ENCODE measurements at regions of chr5 and their contacts with region 1.

Region 1: GRCh38 chr5:112116371-112116770 is 302.7 kb downstream of the EPB41L4A start:
- DNase-seq: peak; percentile 66
- ATAC-seq: peak; percentile 80
- H3K4me3 ChIP-seq: 0 out of 2 replicates have a peak overlapping the region, but pooled peaks have one; percentile 8
- H3K27ac ChIP-seq: peak overlapping the region; percentile 58
- H3K4me1 ChIP-seq: peaks cover 24% of the 10 kb centered on the region
- H3K27me3 ChIP-seq: no peaks in the 10 kb centered on the region
- CTCF ChIP-seq: no peak
- EP300 ChIP-seq: peak in 1 of 2 experiments; percentile 82; a peak in 1 of 4 replicates
- POLR2A ChIP-seq: no peak
- RAD21 ChIP-seq: no peak

Region 2: DNA sequence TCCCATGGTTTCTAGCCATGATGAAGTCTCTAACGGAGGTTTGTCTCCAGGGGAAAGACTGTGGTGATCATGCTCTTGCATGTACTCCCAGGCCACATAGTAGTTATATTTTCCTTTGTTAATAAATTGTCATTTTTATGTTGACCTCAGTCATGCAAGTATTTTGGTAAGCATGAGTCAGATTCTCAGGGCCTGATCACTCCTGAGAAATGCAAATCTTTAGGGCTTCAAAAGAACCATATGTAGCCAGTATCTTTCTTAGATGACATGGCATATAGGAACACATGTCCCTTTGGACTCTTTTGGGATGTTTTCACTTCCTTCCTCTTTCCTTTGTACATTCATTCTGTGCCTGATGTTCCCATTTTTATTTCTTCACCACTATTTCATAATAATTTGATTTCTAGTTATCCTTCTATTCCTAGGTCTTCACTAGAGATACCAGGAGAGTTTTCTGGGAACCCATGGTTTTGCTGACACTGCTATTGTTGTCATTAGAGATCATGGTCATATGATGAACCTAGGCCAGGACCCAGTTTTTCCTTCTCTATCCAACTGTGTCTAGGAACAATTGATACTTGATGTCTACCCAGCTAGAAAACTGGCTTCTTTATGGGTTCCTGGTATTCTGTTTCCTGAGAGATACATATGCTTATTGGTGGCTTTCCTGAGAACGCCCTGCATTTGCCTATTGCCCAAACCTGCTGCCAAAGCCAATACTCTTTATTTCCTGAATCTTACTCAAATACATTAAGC is 111.3 kb before region 1 on chr5:
- CTCF ChIA-PET with region 1: no interaction called
- POLR2A ChIA-PET with region 1: no interaction called
- RAD21 ChIA-PET with region 1: no interaction called
- SMC1A ChIA-PET with region 1: interaction called, 3 read pairs
- in situ Hi-C with region 1: no loop called
- intact Hi-C with region 1: loop called (anchors 5 kb)
- DNase-seq: peak; percentile 53
- ATAC-seq: peak; percentile 90
- H3K4me3 ChIP-seq: no peak overlapping the region
- H3K27ac ChIP-seq: peak overlapping the region; percentile 8; the same call in 1 of the 2 replicates
- H3K4me1 ChIP-seq: peaks cover 7% of the 10 kb centered on the region
- H3K27me3 ChIP-seq: no peaks in the 10 kb centered on the region
- CTCF ChIP-seq: no peak
- EP300 ChIP-seq: peak in 1 of 2 experiments; percentile 9; a peak in 2 of 4 replicates
- POLR2A ChIP-seq: no peak
- RAD21 ChIP-seq: no peak

Region 3: GRCh38 chr5:112025757-112026156 is 90.6 kb before region 1 on chr5:
- CTCF ChIA-PET with region 1: no interaction called
- POLR2A ChIA-PET with region 1: no interaction called
- RAD21 ChIA-PET with region 1: interaction called, 3 read pairs
- SMC1A ChIA-PET with region 1: interaction called, 5 read pairs
- in situ Hi-C with region 1: no loop called
- intact Hi-C with region 1: loop called (anchors 5 kb)
- DNase-seq: peak; percentile 58
- ATAC-seq: peak; percentile 92
- H3K4me3 ChIP-seq: no peak overlapping the region
- H3K27ac ChIP-seq: no peak overlapping the region
- H3K4me1 ChIP-seq: no peaks in the 10 kb centered on the region
- H3K27me3 ChIP-seq: no peaks in the 10 kb centered on the region
- CTCF ChIP-seq: no peak
- EP300 ChIP-seq: 0 out of 4 replicates have a peak, but pooled peaks of 1 of the 2 experiments have one; percentile 8
- POLR2A ChIP-seq: no peak
- RAD21 ChIP-seq: no peak

Region 4: DNA sequence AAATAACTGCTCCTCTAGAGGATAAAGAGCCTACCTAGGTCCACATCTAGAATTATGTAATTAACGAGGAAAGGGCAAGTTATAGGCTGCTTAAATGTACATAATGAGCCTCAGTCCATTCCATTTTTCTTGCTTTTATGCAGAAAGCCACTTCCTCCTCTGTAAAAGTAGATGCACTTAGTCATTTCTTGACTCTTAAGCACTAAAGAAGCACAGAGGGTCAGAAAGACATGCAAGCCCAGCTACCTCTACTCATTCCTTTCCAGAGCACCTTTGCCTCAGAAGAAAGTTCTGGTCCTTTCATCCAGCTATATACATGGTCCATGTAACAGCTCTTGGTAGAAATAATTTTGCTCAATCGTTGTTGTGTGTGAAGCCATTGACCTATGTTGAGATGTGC is 51.4 kb before region 1 on chr5:
- CTCF ChIA-PET with region 1: no interaction called
- POLR2A ChIA-PET with region 1: no interaction called
- RAD21 ChIA-PET with region 1: no interaction called
- SMC1A ChIA-PET with region 1: no interaction called
- in situ Hi-C with region 1: no loop called
- intact Hi-C with region 1: no loop called
- DNase-seq: peak; percentile 3
- ATAC-seq: peak; percentile 72
- H3K4me3 ChIP-seq: no peak overlapping the region
- H3K27ac ChIP-seq: no peak overlapping the region
- H3K4me1 ChIP-seq: no peaks in the 10 kb centered on the region; the same call in 1 of the 2 replicates
- H3K27me3 ChIP-seq: no peaks in the 10 kb centered on the region
- CTCF ChIP-seq: no peak
- EP300 ChIP-seq: no peak
- POLR2A ChIP-seq: no peak
- RAD21 ChIP-seq: no peak

Region 5: DNA sequence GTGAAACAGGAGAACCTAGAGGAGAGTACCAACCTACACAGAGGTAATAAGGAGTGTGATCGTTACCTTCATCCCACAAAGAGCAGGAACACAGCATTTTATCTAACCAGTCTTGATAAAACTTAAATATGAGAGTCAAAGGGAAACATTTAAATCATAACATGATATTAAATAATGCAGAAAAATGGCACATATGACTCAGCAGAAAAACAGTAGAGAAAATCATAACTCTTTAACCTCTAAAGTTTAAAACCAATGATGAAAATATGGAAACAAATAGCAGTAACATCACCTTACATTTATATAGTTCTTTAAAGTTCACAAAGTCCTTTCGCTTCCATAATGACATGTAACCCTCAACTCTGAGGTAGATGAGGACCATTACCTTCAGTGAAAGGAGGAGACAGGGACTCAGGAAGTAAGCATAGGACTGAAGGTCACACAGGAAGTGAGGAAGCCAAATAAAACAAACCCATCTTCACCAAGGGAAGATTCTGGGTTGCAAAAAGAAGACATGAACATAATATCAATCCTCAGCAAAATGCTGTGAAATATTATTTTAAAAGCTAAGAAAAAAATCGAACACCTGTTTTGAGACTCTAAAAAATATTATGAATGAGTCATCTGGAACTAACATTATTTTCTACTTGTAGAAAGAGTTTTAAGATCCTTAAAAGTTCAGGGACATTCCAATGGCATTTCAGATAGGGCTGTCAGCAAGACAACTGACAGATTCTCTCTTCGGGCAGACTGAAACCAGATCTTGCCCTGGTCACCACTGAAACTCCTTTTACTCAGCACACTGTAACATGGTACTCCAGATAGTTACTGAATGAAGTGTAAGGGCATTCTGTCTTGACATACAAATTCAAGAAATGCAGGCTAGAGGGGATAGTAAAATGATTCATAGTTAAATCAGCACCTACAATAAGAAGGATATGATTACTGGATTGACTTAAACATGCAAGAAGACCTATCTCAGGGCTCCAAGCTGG is 154.2 kb after region 1 on chr5:
- CTCF ChIA-PET with region 1: no interaction called
- POLR2A ChIA-PET with region 1: no interaction called
- RAD21 ChIA-PET with region 1: no interaction called
- SMC1A ChIA-PET with region 1: no interaction called
- in situ Hi-C with region 1: no loop called
- intact Hi-C with region 1: no loop called
- DNase-seq: no peak
- ATAC-seq: peak; percentile 91
- H3K4me3 ChIP-seq: no peak overlapping the region
- H3K27ac ChIP-seq: no peak overlapping the region; the same call in 1 of the 2 replicates
- H3K4me1 ChIP-seq: peaks cover 4% of the 10 kb centered on the region
- H3K27me3 ChIP-seq: no peaks in the 10 kb centered on the region
- CTCF ChIP-seq: no peak
- EP300 ChIP-seq: no peak
- POLR2A ChIP-seq: no peak
- RAD21 ChIP-seq: no peak